CD8-positive, alpha-beta T cell (primary cell): ENCODE measurements at regions of chr2 and their contacts with region 1.

Region 1: GRCh38 chr2:224650815-224651439 is 65.2 kb downstream of the CCDC195 start:
- DNase-seq: peak in 3 of 9 experiments; percentile 20 to 69 (median 60)
- ATAC-seq: peak; percentile 54
- H3K4me3 ChIP-seq: no peak overlapping the region
- H3K4me3 Mint-ChIP-seq: no peak overlapping the region
- H3K27ac ChIP-seq: no peak overlapping the region
- H3K27ac Mint-ChIP-seq: no peak overlapping the region
- H3K4me1 ChIP-seq: no peaks in the 10 kb centered on the region
- H3K4me1 Mint-ChIP-seq: peaks cover 2% of the 10 kb centered on the region
- H3K27me3 ChIP-seq: no peaks in the 10 kb centered on the region
- H3K27me3 Mint-ChIP-seq: no peaks in the 10 kb centered on the region
- CTCF ChIP-seq: peak; percentile 91

Region 2: GRCh38 chr2:223513771-223514455 is 1137.0 kb before region 1 on chr2:
- CTCF ChIA-PET with region 1: no interaction called
- POLR2A ChIA-PET with region 1: no interaction called
- intact Hi-C with region 1: no loop called
- DNase-seq: no peak
- ATAC-seq: no peak
- H3K4me3 ChIP-seq: no peak overlapping the region
- H3K4me3 Mint-ChIP-seq: no peak overlapping the region
- H3K27ac ChIP-seq: no peak overlapping the region
- H3K27ac Mint-ChIP-seq: no peak overlapping the region
- H3K4me1 ChIP-seq: no peaks in the 10 kb centered on the region
- H3K4me1 Mint-ChIP-seq: no peaks in the 10 kb centered on the region
- H3K27me3 ChIP-seq: no peaks in the 10 kb centered on the region
- H3K27me3 Mint-ChIP-seq: peaks cover 2% of the 10 kb centered on the region
- CTCF ChIP-seq: no peak

Region 3: DNA sequence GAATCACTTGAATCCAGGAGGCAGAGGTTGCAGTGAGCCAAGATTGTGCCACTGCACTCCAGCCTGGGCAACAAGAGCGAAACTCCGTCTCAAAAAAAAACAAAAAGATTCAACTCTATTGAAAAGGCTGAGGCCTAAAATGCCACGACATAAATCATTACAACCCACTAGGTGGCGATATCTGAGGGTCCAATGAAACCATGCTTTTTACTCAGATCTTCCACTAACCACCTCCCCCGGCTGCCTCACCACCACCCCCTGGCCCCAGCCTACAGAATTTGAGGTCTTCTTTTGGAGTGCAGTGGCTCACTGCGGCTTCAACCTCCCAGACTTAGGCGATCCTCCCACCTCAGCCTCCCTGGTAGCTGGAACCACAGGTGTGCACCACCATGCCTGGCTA is 871.0 kb before region 1 on chr2:
- CTCF ChIA-PET with region 1: no interaction called
- POLR2A ChIA-PET with region 1: no interaction called
- intact Hi-C with region 1: loop called in 1 of 2 experiments (anchors 5 kb)
- DNase-seq: peak in 6 of 9 experiments; percentile 4 to 67 (median 28)
- ATAC-seq: peak; percentile 75
- H3K4me3 ChIP-seq: no peak overlapping the region
- H3K4me3 Mint-ChIP-seq: no peak overlapping the region
- H3K27ac ChIP-seq: no peak overlapping the region
- H3K27ac Mint-ChIP-seq: no peak overlapping the region
- H3K4me1 ChIP-seq: no peaks in the 10 kb centered on the region
- H3K4me1 Mint-ChIP-seq: no peaks in the 10 kb centered on the region
- H3K27me3 ChIP-seq: no peaks in the 10 kb centered on the region
- H3K27me3 Mint-ChIP-seq: no peaks in the 10 kb centered on the region
- CTCF ChIP-seq: peak; percentile 29

Region 4: GRCh38 chr2:224357098-224357901 is 293.6 kb before region 1 on chr2:
- CTCF ChIA-PET with region 1: interaction called, 76 read pairs
- POLR2A ChIA-PET with region 1: no interaction called
- intact Hi-C with region 1: loop called (anchors 1 kb)
- DNase-seq: peak in 8 of 9 experiments; percentile 16 to 73 (median 54)
- ATAC-seq: peak; percentile 57
- H3K4me3 ChIP-seq: no peak overlapping the region
- H3K4me3 Mint-ChIP-seq: no peak overlapping the region
- H3K27ac ChIP-seq: no peak overlapping the region
- H3K27ac Mint-ChIP-seq: no peak overlapping the region
- H3K4me1 ChIP-seq: no peaks in the 10 kb centered on the region
- H3K4me1 Mint-ChIP-seq: no peaks in the 10 kb centered on the region
- H3K27me3 ChIP-seq: no peaks in the 10 kb centered on the region
- H3K27me3 Mint-ChIP-seq: peaks cover 4% of the 10 kb centered on the region
- CTCF ChIP-seq: peak; percentile 88

Region 5: GRCh38 chr2:224469374-224469964 is 181.5 kb before region 1 on chr2:
- CTCF ChIA-PET with region 1: interaction called, 10 read pairs
- POLR2A ChIA-PET with region 1: no interaction called
- intact Hi-C with region 1: no loop called
- DNase-seq: peak in 1 of 9 experiments; percentile 15
- ATAC-seq: no peak
- H3K4me3 ChIP-seq: no peak overlapping the region
- H3K4me3 Mint-ChIP-seq: no peak overlapping the region
- H3K27ac ChIP-seq: no peak overlapping the region
- H3K27ac Mint-ChIP-seq: no peak overlapping the region
- H3K4me1 ChIP-seq: no peaks in the 10 kb centered on the region
- H3K4me1 Mint-ChIP-seq: no peaks in the 10 kb centered on the region
- H3K27me3 ChIP-seq: no peaks in the 10 kb centered on the region
- H3K27me3 Mint-ChIP-seq: no peaks in the 10 kb centered on the region
- CTCF ChIP-seq: no peak

Region 6: GRCh38 chr2:224778474-224778877 is 127.5 kb after region 1 on chr2:
- CTCF ChIA-PET with region 1: interaction called, 5 read pairs
- POLR2A ChIA-PET with region 1: no interaction called
- intact Hi-C with region 1: loop called in 1 of 2 experiments (anchors 5 kb)
- DNase-seq: peak; percentile 29 to 70 (median 55)
- ATAC-seq: peak; percentile 63
- H3K4me3 ChIP-seq: no peak overlapping the region
- H3K4me3 Mint-ChIP-seq: no peak overlapping the region
- H3K27ac ChIP-seq: no peak overlapping the region
- H3K27ac Mint-ChIP-seq: no peak overlapping the region
- H3K4me1 ChIP-seq: no peaks in the 10 kb centered on the region
- H3K4me1 Mint-ChIP-seq: peaks cover 5% of the 10 kb centered on the region
- H3K27me3 ChIP-seq: no peaks in the 10 kb centered on the region
- H3K27me3 Mint-ChIP-seq: no peaks in the 10 kb centered on the region
- CTCF ChIP-seq: peak; percentile 89